ENCODE measurements at regions of chr3 and their contacts with region 1.

Region 1: GRCh38 chr3:127735767-127736704 is 63.3 kb downstream of the ABTB1 start:
- DNase-seq: peak; percentile 77 to 89 (median 85)
- H3K4me3 ChIP-seq: peak overlapping the region in 1 of 3 experiments; percentile 28
- H3K4me3 Mint-ChIP-seq: peak overlapping the region; percentile 12 to 85
- H3K27ac ChIP-seq: peak overlapping the region; percentile 69 to 77
- H3K27ac Mint-ChIP-seq: peak overlapping the region; percentile 88 to 96 (median 92)
- H3K4me1 ChIP-seq: peaks cover 63 to 66% of the 10 kb centered on the region in 2 donors
- H3K4me1 Mint-ChIP-seq: peaks cover 66% of the 10 kb centered on the region
- H3K27me3 ChIP-seq: no peaks in the 10 kb centered on the region
- H3K27me3 Mint-ChIP-seq: peaks cover under 1 to 3% (median 2%) of the 10 kb centered on the region in 3 donors
- CTCF ChIP-seq: no peak

Region 2: DNA sequence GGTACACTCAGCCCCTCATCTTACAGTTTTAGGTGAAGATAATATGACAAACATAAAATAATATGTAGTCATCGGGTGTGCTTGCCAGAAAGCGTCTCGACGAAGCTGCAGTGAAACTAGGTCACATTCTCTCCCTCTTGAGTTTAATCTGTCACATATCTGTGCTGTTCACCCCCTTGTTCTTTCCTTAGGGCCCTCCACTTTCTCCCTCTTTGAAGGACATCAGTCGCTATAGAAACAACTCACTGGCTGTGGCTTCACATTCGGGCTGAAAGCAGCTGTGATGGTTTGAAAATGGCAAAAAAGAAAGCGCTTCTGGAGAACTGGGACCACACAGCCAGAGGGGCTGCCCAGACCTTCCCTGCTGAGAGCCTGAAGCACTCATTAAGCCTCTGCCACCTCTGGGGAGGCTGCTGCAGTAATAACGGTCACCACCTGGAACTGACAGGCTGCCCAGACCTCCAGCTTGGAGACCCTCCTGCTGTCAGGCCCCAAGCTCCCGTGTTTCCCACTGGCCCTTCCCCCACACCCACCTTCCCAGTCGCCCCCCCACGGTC is 12.9 kb before region 1 on chr3:
- intact Hi-C with region 1: no loop called
- DNase-seq: no peak
- H3K4me3 ChIP-seq: no peak overlapping the region
- H3K4me3 Mint-ChIP-seq: no peak overlapping the region
- H3K27ac ChIP-seq: no peak overlapping the region
- H3K27ac Mint-ChIP-seq: no peak overlapping the region
- H3K4me1 ChIP-seq: peaks cover under 1 to 5% of the 10 kb centered on the region in 2 donors
- H3K4me1 Mint-ChIP-seq: peaks cover 4% of the 10 kb centered on the region
- H3K27me3 ChIP-seq: no peaks in the 10 kb centered on the region
- H3K27me3 Mint-ChIP-seq: no peaks in the 10 kb centered on the region
- CTCF ChIP-seq: no peak

Region 3: GRCh38 chr3:127775398-127776109 is 39.5 kb after region 1 on chr3:
- intact Hi-C with region 1: loop called in 1 of 2 experiments (anchors 5 kb)
- DNase-seq: peak in 2 of 3 donors; percentile 38 to 95
- H3K4me3 ChIP-seq: peak overlapping the region in 1 of 3 experiments; percentile 24
- H3K4me3 Mint-ChIP-seq: peak overlapping the region; percentile 59 to 71
- H3K27ac ChIP-seq: peak overlapping the region in 1 of 2 donors; percentile 57
- H3K27ac Mint-ChIP-seq: peak overlapping the region; percentile 13 to 86 (median 69)
- H3K4me1 ChIP-seq: peaks cover 77 to 86% of the 10 kb centered on the region in 2 donors
- H3K4me1 Mint-ChIP-seq: peaks cover 84% of the 10 kb centered on the region
- H3K27me3 ChIP-seq: no peaks in the 10 kb centered on the region
- H3K27me3 Mint-ChIP-seq: peaks cover 0 to 7% (median 0%) of the 10 kb centered on the region in 3 donors
- CTCF ChIP-seq: no peak